H1 (cell line): ENCODE measurements at regions of chr2 and their contacts with region 1.

Region 1: DNA sequence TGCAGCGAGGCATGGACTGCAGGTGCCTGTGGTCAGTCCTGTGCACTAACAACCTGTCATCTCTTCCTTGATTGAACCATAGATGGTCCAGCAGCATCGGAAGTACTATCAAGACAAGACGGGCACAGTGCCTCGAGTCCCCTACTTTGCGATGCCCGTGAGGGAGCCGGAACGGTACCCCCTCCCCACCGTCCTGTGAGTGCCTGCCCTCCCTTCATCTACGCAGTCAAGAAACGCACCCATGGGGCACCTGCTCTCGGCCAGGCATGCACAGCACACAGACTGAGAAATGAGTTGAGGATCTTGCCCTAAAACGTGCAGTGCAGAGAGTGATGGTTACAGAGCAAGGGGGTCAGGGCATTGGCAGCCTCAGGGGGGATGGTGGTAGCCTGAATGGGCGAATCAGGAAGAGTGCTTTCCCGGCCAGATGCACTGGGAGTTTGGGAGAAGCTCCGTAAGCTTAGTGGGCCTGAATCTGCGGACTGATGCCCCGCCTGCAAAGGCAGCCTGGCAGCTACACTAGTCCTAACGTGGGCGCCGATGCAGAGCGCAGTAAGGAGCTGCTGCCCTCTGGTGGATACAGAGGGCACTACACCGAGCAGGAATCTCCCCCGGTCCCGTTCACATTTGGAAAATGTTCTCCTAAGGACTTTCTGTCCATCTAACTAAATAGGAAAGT is 63.6 kb downstream of the CIB4 start:
- DNase-seq: peak; percentile 46 to 90
- H3K4me3 ChIP-seq: no peak overlapping the region
- H3K27ac ChIP-seq: no peak overlapping the region
- H3K4me1 ChIP-seq: peaks cover 0 to 3% (median 1%) of the 10 kb centered on the region in 4 experiments; a peak in 2 of 7 replicates
- H3K27me3 ChIP-seq: peaks cover 0 to 2% (median under 1%) of the 10 kb centered on the region in 4 experiments; a peak in 3 of 7 replicates
- CTCF ChIP-seq: peak in 2 of 3 experiments; percentile 97 to 99; a peak in 3 of 4 replicates
- EP300 ChIP-seq: no peak
- POLR2A ChIP-seq: no peak
- RAD21 ChIP-seq: peak; percentile 96

Region 2: DNA sequence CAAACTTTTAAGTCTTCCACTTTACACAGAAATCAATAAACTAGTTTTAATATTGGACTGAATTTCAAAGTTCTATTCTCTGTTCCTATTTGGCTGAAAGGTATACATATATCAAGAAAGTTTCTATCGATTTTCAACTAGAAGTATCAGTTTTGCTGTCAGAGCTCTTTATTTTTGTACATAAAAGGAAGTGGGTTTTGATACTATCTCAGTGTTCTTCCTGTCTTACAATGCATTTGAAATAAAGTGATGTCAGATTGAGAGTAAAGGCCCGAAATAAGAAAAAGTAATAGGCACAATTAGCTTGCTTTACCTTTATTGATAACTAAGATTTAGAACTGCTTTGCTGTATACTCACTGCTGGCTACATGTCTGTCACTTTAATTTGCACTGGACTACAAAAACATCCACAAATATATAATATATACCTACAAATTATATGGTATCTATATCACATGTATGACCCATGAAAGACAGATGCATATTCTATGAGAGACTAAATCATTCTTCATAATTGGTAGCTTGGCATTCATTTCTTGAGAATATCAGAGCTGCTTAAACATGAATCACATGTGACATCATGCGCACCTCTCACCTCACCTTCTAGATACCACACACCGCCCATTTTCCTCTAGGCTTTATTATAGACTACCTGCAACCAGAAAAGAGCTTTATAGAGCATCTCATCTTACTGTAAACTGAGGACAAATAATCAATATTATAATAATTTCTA is 782.9 kb before region 1 on chr2:
- CTCF ChIA-PET with region 1: no interaction called
- POLR2A ChIA-PET with region 1: no interaction called
- DNase-seq: no peak
- H3K4me3 ChIP-seq: no peak overlapping the region
- H3K27ac ChIP-seq: no peak overlapping the region
- H3K4me1 ChIP-seq: no peaks in the 10 kb centered on the region
- H3K27me3 ChIP-seq: no peaks in the 10 kb centered on the region
- CTCF ChIP-seq: no peak
- EP300 ChIP-seq: no peak
- POLR2A ChIP-seq: no peak
- RAD21 ChIP-seq: no peak

Region 3: GRCh38 chr2:26355038-26355995 is 222.3 kb before region 1 on chr2:
- CTCF ChIA-PET with region 1: no interaction called
- POLR2A ChIA-PET with region 1: no interaction called
- DNase-seq: no peak
- H3K4me3 ChIP-seq: no peak overlapping the region
- H3K27ac ChIP-seq: no peak overlapping the region
- H3K4me1 ChIP-seq: peaks cover 0 to 3% (median under 1%) of the 10 kb centered on the region in 4 experiments; a peak in 3 of 7 replicates
- H3K27me3 ChIP-seq: no peaks in the 10 kb centered on the region
- CTCF ChIP-seq: no peak
- EP300 ChIP-seq: no peak
- POLR2A ChIP-seq: no peak
- RAD21 ChIP-seq: no peak

Region 4: DNA sequence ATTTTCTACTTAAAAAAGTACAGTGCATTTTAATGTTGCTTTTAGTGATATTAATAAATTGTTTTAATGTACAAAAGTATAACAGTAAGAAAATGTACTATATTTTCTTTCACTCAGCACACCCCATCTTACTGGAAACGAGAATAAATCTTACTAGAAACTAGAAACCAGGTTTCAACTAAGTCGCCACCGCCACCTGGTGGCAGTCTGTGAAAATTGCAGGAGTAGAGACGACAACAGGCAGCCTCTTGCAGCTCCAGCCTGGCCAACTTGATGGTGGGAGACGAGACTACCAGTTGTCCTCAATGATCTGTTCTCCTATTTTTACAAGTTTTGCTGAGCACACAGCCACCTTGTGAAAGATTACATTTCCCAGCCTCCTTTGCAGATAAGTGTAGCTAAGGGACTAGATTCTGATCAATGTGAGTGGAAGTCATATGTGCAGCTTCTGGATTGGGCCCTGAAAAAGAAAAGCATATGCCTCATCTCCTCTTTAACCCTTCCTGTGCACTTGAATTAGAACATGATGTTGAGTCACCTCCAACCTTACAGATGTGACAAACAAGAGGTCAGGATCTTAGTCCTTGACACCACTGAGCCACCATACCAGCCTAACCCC is 108.4 kb before region 1 on chr2:
- CTCF ChIA-PET with region 1: interaction called, 39 read pairs
- POLR2A ChIA-PET with region 1: no interaction called
- DNase-seq: peak; percentile 75 to 93
- H3K4me3 ChIP-seq: no peak overlapping the region
- H3K27ac ChIP-seq: no peak overlapping the region
- H3K4me1 ChIP-seq: peaks cover 0 to 3% (median 0%) of the 10 kb centered on the region in 4 experiments; a peak in 2 of 7 replicates
- H3K27me3 ChIP-seq: peaks cover 0 to 3% (median 0%) of the 10 kb centered on the region in 4 experiments; a peak in 1 of 7 replicates
- CTCF ChIP-seq: peak in 2 of 3 experiments; percentile 85 to 86; a peak in 3 of 4 replicates
- EP300 ChIP-seq: no peak
- POLR2A ChIP-seq: no peak
- RAD21 ChIP-seq: peak; percentile 90 to 94

Region 5: GRCh38 chr2:26516246-26516645 is 61.3 kb before region 1 on chr2:
- CTCF ChIA-PET with region 1: interaction called, 97 read pairs
- POLR2A ChIA-PET with region 1: no interaction called
- DNase-seq: no peak
- H3K4me3 ChIP-seq: no peak overlapping the region
- H3K27ac ChIP-seq: no peak overlapping the region
- H3K4me1 ChIP-seq: no peaks in the 10 kb centered on the region
- H3K27me3 ChIP-seq: no peaks in the 10 kb centered on the region
- CTCF ChIP-seq: no peak
- EP300 ChIP-seq: no peak
- POLR2A ChIP-seq: no peak
- RAD21 ChIP-seq: no peak

Region 6: GRCh38 chr2:26530696-26531095 is 46.9 kb before region 1 on chr2:
- CTCF ChIA-PET with region 1: interaction called, 23 read pairs
- POLR2A ChIA-PET with region 1: no interaction called
- DNase-seq: no peak
- H3K4me3 ChIP-seq: no peak overlapping the region
- H3K27ac ChIP-seq: no peak overlapping the region
- H3K4me1 ChIP-seq: peaks cover 0 to 3% (median under 1%) of the 10 kb centered on the region in 4 experiments; a peak in 2 of 7 replicates
- H3K27me3 ChIP-seq: no peaks in the 10 kb centered on the region
- CTCF ChIP-seq: no peak
- EP300 ChIP-seq: no peak
- POLR2A ChIP-seq: no peak
- RAD21 ChIP-seq: 0 out of 4 replicates have a peak, but pooled peaks of 1 of the 2 experiments have one; percentile 5

Region 7: DNA sequence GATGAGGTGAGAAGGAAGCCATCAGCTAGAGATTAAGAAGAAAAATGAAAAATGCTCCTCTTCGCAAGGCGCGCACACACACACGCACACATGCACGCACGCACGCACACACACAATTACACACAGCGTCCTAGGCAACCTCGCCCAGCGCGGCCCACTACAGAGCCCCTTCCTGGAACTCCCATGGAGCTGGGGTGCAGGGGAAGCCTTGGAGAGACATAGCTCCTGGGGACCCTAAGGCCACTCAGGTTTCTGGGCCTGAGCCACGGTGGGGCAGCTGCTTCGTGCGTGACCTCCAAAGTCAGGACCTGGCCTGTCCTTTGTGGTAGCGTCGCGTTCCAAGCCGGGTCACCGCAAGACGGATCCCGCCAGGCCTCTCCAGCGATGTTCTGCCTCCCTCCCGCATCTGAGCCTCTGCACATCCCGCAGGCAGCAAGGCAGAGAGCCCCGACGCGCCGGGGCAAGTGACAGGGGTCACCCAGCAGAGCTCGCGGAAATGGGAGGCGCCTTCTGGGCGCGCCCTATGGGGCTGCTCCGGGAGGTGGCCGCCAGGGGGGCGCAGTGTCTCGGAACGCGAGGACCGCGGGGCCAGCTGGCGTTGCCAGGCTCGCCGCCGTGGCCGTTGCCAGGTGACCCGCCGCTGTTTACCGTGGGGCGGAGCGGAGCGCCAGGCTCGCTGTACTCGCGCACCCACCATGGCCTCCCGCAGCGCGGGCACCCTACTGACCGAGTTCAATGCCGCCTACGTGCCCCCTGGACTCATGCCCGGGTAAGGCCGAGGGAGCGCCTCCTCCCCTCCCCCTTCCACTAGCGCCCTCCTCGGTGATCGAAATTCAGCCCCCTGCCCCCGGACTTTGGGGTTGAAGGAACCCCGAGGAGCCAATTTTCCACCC is 15.4 kb before region 1 on chr2:
- CTCF ChIA-PET with region 1: interaction called, 159 read pairs
- POLR2A ChIA-PET with region 1: interaction called, 3 read pairs
- DNase-seq: no peak
- H3K4me3 ChIP-seq: peak overlapping the region in 2 of 4 experiments; percentile 19 to 35; a peak in 3 of 8 replicates
- H3K27ac ChIP-seq: no peak overlapping the region
- H3K4me1 ChIP-seq: peaks cover 0 to 24% (median 11%) of the 10 kb centered on the region in 4 experiments; a peak in 6 of 7 replicates
- H3K27me3 ChIP-seq: peaks cover 0 to 20% (median 9%) of the 10 kb centered on the region in 4 experiments; a peak in 5 of 7 replicates
- CTCF ChIP-seq: no peak
- EP300 ChIP-seq: no peak
- POLR2A ChIP-seq: no peak
- RAD21 ChIP-seq: no peak

Region 8: DNA sequence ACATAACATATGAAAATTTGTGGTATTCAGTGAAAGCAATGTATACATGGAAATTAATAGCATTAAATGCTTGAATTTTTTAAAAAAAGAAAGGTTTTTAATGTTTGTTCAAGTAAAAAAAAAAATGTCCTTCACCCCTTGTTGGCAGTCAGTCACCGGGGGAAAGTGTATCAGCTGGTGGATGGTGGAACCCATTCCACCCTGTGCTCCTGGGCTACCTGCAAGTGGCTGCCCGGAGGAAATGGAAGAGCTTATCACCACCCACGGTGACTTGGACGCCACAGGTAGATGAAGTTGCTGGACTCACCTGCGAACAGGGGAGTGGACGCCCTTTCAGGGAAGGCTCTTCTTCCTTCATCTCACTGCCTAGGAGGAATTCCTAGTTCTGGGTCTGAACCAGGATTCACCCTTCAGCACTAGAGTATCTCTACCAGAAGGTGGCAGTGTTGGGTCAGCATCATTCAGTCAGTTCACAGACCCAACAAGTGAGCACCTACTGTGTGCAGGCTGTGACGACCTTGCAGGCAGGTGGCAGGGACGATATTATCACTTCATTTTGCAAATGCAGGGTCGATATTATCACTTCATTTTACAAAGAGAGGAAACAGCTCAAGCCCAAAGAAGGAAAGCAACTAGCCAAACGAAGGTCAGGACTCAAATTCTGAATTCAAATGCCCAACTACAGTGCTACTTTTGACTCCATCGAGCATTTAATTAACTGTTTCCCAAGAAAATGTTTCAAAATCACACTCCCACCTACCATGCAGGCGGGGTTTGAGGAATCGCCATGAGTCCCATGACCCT is 27.8 kb after region 1 on chr2:
- CTCF ChIA-PET with region 1: interaction called, 11 read pairs
- POLR2A ChIA-PET with region 1: no interaction called
- DNase-seq: peak; percentile 36 to 72
- H3K4me3 ChIP-seq: no peak overlapping the region
- H3K27ac ChIP-seq: no peak overlapping the region
- H3K4me1 ChIP-seq: no peaks in the 10 kb centered on the region; a peak in 2 of 7 replicates
- H3K27me3 ChIP-seq: no peaks in the 10 kb centered on the region
- CTCF ChIP-seq: peak; percentile 62 to 96 (median 90)
- EP300 ChIP-seq: no peak
- POLR2A ChIP-seq: no peak
- RAD21 ChIP-seq: peak; percentile 94 to 98

Region 9: GRCh38 chr2:26745609-26746327 is 168.2 kb after region 1 on chr2:
- CTCF ChIA-PET with region 1: interaction called, 16 read pairs
- POLR2A ChIA-PET with region 1: no interaction called
- DNase-seq: peak in 1 of 2 experiments; percentile 90
- H3K4me3 ChIP-seq: no peak overlapping the region
- H3K27ac ChIP-seq: no peak overlapping the region
- H3K4me1 ChIP-seq: peaks cover 0 to under 1% (median under 1%) of the 10 kb centered on the region in 4 experiments; a peak in 4 of 7 replicates
- H3K27me3 ChIP-seq: peaks cover 0 to 5% (median 0%) of the 10 kb centered on the region in 4 experiments; a peak in 3 of 7 replicates
- CTCF ChIP-seq: peak; percentile 76 to 95 (median 91)
- EP300 ChIP-seq: no peak
- POLR2A ChIP-seq: no peak
- RAD21 ChIP-seq: peak; percentile 97 to 98